Posterior vena cava (tissue), 2 donors: ENCODE measurements at regions of chr5 and their contacts with region 1.

Region 1: DNA sequence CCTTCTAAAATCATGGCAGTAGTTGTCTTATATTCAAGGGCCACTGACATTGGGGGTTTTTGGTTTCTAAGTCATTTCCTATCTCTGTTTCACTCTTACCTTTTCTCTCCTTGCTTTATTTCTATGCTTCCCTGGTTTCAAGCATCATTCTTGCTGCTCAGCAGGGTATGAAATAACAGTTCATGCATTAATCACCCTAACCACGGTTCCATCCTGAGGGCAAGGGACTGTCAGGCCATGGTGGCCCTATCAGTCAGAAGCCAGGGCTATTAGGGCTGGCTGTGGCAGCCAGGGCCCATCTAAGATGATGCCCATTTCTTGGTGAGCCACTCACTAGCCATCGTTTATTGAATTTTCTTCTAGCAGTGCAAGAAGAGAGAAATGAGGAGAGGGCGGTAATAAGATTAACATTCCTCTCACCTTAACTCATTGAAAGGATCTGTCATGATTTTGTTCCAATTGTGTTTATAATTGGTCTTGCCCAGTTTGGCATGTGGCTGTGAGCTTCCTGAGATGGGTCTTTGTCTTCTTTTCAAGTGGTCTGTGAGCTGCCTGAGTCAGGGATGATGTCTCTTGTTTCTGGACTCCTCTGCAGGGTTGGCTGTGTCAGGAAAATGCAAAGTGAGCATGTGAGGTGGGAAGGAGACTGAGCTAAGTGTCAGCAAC is 45.2 kb downstream of the CYSTM1 start:
- DNase-seq: no peak

Region 2: GRCh38 chr5:140172483-140172882 is 47.7 kb before region 1 on chr5:
- intact Hi-C with region 1: no loop called
- DNase-seq: no peak

Region 3: DNA sequence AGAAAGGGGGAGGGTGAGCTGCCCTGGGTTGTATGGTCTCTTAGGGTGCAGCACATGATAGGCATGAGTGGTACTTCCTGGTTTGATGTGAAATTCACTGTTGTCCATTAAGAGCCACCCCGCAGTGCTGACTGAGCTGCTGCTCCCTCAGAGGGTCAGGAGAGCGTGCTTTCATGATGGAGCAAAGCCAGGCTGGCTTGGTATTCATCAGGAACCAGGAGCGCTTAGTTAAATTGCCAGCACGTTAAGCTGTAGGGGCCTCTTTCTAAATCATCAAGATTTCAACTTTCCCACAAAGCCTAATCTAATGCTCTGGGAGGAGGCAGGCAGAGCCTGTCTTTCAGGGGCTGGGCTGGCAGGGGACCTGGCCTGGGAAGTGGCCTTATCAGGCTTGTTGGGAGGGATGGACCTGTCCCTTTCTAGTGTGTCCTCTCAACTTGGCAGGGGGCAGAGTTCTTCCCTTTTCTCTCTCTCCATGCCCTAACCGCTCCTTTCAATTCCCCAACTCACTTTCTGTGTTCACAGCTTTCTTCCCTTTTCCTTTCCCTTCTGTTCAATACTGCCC is 37.3 kb before region 1 on chr5:
- intact Hi-C with region 1: loop called in 1 of 2 experiments (anchors 5 kb)
- DNase-seq: no peak